Activated naive CD8-positive, alpha-beta T cell treated with anti-CD3 and anti-CD28 coated beads, Interleukin-2, amount 10 ng/mL, durations not matched to agents 7 days and 5 days (primary cell): ENCODE measurements at regions of chr1 and their contacts with region 1.

Region 1: DNA sequence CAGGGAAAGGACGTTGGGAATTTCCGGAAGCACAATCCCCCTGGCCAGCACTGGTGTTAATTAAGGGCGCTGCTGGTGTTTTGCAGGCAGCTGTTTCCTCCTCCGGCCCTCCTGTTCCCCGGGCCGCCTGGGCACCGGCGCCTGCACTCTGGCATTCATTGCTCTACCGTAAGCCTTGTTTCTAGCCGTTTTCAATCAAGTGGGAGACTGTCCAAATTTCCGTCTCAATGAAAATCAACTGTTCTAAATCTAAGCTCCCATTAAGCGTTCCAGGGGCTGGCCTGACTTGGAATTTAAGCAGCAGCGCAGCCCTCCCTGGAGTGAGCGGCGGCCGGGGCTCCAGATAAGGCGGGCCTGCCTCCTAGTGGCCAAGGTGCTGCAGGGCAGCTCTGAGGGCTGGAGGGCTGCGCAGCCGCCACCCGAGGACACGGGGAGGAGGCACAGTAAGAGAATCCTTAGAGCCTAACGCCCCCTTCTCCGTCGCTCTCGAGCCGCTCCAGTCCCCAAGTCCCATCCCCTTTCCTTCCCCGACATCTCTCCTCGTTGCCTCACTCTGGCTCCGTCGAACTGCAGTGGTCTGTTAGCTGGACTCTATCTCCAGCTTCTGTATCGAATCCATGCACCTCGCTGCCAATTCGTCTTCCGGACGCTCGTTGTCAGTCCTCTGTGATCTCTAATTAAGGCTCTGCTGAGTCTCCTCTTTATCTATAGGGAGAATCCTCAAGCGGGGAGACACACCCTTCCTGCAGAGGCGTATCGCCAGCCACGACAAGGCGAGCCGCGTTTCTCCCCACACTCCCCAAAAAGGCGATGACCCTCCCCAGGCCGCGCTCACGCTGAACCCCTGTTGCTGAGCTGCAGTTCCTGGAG is 57.8 kb upstream of the LRRC8D start:
- DNase-seq: peak; percentile 89
- ATAC-seq: peak; percentile 99
- H3K4me3 Mint-ChIP-seq: peak overlapping the region; percentile 93
- H3K27ac Mint-ChIP-seq: peak overlapping the region; percentile 86
- H3K4me1 Mint-ChIP-seq: peaks cover 46% of the 10 kb centered on the region
- H3K27me3 Mint-ChIP-seq: peaks cover 8% of the 10 kb centered on the region

Region 2: DNA sequence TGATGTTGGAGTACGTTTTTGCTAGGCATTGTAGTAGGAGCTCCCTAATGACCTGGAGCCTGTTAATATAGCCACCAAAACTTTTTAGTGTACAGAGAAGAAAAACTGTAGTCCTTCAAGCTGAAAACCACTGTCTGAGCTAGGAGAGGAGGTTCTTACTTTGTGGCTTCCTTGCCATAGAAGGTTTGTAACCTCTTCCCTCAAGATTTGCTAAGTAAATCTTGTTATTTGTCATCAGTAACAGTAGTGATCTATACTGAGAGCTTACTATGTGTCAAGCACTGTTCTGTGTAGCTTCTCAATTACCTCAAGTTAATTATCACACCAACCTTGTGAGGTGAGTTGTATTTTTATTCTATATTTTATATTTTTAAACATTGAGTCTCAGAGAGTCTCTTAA is 151.3 kb before region 1 on chr1:
- POLR2A ChIA-PET with region 1: interaction called, 22 read pairs
- DNase-seq: no peak
- ATAC-seq: peak; percentile 44
- H3K4me3 Mint-ChIP-seq: peak overlapping the region; percentile 81
- H3K27ac Mint-ChIP-seq: peak overlapping the region; percentile 99
- H3K4me1 Mint-ChIP-seq: peaks cover 58% of the 10 kb centered on the region
- H3K27me3 Mint-ChIP-seq: no peaks in the 10 kb centered on the region

Region 3: DNA sequence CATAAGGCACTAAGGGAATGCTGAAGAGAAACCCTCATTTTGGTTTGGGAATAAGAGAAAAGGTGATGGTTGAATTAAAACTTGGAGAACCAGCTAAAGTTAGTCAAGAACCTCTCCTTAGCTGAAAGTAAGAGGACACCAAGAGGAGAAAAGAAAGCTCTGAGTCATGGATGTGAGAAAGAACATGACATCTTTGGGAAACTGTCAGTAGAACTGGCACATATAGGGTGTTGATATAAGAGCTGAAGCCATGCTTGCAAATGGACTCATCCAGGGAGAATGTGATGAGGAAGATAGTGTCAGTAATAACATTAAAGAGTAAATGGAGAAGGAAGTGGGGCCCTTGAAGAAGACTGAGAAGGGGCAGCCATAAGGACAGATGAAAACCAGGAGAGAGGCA is 75.8 kb before region 1 on chr1:
- POLR2A ChIA-PET with region 1: no interaction called
- DNase-seq: no peak
- ATAC-seq: no peak
- H3K4me3 Mint-ChIP-seq: no peak overlapping the region
- H3K27ac Mint-ChIP-seq: no peak overlapping the region
- H3K4me1 Mint-ChIP-seq: peaks cover 19% of the 10 kb centered on the region
- H3K27me3 Mint-ChIP-seq: no peaks in the 10 kb centered on the region

Region 4: GRCh38 chr1:89719502-89720306 is 43.3 kb before region 1 on chr1:
- POLR2A ChIA-PET with region 1: interaction called, 12 read pairs
- DNase-seq: no peak
- ATAC-seq: peak; percentile 85
- H3K4me3 Mint-ChIP-seq: peak overlapping the region; percentile 72
- H3K27ac Mint-ChIP-seq: peak overlapping the region; percentile 95
- H3K4me1 Mint-ChIP-seq: peaks cover 57% of the 10 kb centered on the region
- H3K27me3 Mint-ChIP-seq: no peaks in the 10 kb centered on the region